ENCODE measurements at regions of chr11 and their contacts with region 1.

Region 1: DNA sequence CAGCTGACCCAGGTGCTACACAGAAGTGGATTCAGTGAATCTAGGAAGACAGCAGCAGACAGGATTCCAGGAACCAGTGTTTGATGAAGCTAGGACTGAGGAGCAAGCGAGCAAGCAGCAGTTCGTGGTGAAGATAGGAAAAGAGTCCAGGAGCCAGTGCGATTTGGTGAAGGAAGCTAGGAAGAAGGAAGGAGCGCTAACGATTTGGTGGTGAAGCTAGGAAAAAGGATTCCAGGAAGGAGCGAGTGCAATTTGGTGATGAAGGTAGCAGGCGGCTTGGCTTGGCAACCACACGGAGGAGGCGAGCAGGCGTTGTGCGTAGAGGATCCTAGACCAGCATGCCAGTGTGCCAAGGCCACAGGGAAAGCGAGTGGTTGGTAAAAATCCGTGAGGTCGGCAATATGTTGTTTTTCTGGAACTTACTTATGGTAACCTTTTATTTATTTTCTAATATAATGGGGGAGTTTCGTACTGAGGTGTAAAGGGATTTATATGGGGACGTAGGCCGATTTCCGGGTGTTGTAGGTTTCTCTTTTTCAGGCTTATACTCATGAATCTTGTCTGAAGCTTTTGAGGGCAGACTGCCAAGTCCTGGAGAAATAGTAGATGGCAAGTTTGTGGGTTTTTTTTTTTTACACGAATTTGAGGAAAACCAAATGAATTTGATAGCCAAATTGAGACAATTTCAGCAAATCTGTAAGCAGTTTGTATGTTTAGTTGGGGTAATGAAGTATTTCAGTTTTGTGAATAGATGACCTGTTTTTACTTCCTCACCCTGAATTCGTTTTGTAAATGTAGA is 1.7 kb downstream of the MALAT1 start:
- DNase-seq: no peak
- ATAC-seq: no peak
- H3K4me3 ChIP-seq: peak overlapping the region; percentile 71
- H3K27ac ChIP-seq: peak overlapping the region; percentile 99
- H3K4me1 ChIP-seq: peaks cover 28% of the 10 kb centered on the region
- H3K27me3 ChIP-seq: no peaks in the 10 kb centered on the region
- CTCF ChIP-seq: no peak

Region 2: DNA sequence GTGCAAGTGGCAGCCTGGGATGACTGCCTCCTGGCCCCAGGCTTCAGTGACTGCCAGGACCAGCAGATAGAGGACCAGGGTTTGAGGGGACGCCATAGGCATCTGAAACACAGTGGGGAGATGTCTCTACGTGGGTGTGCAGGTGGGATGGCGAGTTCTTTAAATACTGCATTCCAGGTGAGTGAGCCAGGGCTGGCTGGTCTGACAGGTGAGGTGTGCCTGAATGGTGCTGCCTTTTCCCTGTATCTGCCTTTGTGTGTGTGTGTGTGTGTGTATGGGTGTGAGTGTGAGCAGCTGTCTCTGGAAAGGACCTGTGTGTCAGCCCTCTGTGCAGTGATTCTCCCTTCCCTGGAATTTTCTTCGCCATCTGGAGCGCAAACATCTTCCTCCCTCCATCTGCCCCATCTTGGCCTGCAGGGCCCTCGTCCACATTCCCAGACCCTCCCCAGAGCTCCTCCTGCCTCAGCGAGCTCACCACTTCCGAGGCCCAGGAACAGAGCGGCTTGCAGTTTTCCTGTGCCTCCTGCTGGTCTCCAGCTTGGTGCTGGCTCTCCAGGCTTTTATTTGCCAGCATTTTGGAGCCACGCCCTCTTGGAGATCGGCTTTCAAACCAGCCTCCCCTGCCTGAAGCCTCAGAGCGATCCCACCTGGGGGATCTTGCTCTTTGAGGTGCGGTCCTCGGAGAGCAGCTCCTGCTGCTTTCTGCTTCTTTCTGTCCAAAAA is 565.1 kb before region 1 on chr11 and contains the start of gene GPHA2:
- intact Hi-C with region 1: no loop called
- DNase-seq: no peak
- ATAC-seq: no peak
- H3K4me3 ChIP-seq: no peak within 1 kb of the TSS
- H3K27ac ChIP-seq: no peak within 1 kb of the TSS
- H3K4me1 ChIP-seq: no peaks in the 10 kb centered on the region
- H3K27me3 ChIP-seq: no peaks in the 10 kb centered on the region
- CTCF ChIP-seq: no peak
- total RNA-seq, gene GPHA2: not detected

Region 3: GRCh38 chr11:65425105-65425970 is 75.2 kb before region 1 on chr11:
- intact Hi-C with region 1: loop called (anchors 5 kb)
- DNase-seq: peak; percentile 48
- ATAC-seq: no peak
- H3K4me3 ChIP-seq: peak overlapping the region; percentile 91
- H3K27ac ChIP-seq: peak overlapping the region; percentile 100
- H3K4me1 ChIP-seq: peaks cover 45% of the 10 kb centered on the region
- H3K27me3 ChIP-seq: no peaks in the 10 kb centered on the region
- CTCF ChIP-seq: peak; percentile 16